Ovary (tissue), 10 donors: ENCODE measurements at regions of chr9 and their contacts with region 1.

Region 1: GRCh38 chr9:12065050-12065449 is 628.1 kb upstream of the TYRP1 start:
- DNase-seq: no peak
- H3K4me3 ChIP-seq: no peak overlapping the region
- H3K27ac ChIP-seq: no peak overlapping the region
- H3K4me1 ChIP-seq: no peaks in the 10 kb centered on the region
- H3K27me3 ChIP-seq: no peaks in the 10 kb centered on the region
- CTCF ChIP-seq: no peak
- EP300 ChIP-seq: no peak
- POLR2A ChIP-seq: no peak

Region 2: GRCh38 chr9:10863476-10863875 is 1201.6 kb before region 1 on chr9:
- intact Hi-C with region 1: loop called in 1 of 4 experiments (anchors 10 kb)
- DNase-seq: no peak
- H3K4me3 ChIP-seq: no peak overlapping the region
- H3K27ac ChIP-seq: no peak overlapping the region
- H3K4me1 ChIP-seq: no peaks in the 10 kb centered on the region
- H3K27me3 ChIP-seq: no peaks in the 10 kb centered on the region
- CTCF ChIP-seq: no peak
- EP300 ChIP-seq: no peak
- POLR2A ChIP-seq: no peak

Region 3: DNA sequence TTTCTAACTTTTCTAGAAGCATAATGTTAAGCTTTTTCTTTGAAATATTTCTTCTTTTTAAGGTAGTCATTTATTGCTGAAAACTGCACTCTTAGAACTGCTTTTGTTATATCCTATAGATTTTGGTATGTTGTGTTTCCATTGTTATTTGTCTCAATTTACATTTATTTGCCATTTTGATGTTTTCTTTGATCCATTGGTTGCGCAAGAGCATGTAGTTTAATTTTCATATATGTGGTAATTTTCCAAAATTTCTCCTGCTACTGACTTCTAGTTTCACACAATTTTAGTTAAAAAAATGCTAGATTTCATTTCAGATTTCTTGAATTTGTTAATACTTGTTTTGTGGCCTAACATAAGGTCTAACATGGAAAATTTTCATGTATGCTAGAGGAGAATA is 401.1 kb before region 1 on chr9:
- intact Hi-C with region 1: no loop called
- DNase-seq: no peak
- H3K4me3 ChIP-seq: no peak overlapping the region
- H3K27ac ChIP-seq: no peak overlapping the region
- H3K4me1 ChIP-seq: no peaks in the 10 kb centered on the region
- H3K27me3 ChIP-seq: no peaks in the 10 kb centered on the region
- CTCF ChIP-seq: no peak
- EP300 ChIP-seq: no peak
- POLR2A ChIP-seq: no peak

Region 4: DNA sequence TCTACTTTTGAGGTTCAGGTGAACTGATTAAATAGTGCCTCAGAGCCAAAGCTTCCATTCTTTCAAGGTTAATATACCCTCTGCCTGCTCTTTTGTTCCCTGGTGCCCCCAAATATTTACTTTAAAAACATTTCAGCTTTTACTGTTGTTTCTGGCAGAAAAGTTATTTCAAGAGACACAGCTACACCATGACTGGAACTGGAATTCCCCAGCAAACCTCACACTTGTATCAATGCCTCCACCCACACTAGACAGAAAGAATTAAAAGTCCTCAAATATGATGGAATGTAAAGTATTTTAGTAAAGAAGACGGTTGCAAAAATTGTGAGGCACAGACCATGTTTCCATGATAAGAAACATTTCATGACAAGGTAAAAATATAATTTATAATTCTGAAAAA is 92.0 kb before region 1 on chr9:
- intact Hi-C with region 1: no loop called
- DNase-seq: no peak
- H3K4me3 ChIP-seq: no peak overlapping the region
- H3K27ac ChIP-seq: no peak overlapping the region
- H3K4me1 ChIP-seq: no peaks in the 10 kb centered on the region
- H3K27me3 ChIP-seq: no peaks in the 10 kb centered on the region
- CTCF ChIP-seq: no peak
- EP300 ChIP-seq: no peak
- POLR2A ChIP-seq: no peak